Activated CD4-positive, alpha-beta memory T cell treated with anti-CD3 and anti-CD28 coated beads for 36 hours (primary cell): ENCODE measurements at regions of chr3 and their contacts with region 1.

Region 1: DNA sequence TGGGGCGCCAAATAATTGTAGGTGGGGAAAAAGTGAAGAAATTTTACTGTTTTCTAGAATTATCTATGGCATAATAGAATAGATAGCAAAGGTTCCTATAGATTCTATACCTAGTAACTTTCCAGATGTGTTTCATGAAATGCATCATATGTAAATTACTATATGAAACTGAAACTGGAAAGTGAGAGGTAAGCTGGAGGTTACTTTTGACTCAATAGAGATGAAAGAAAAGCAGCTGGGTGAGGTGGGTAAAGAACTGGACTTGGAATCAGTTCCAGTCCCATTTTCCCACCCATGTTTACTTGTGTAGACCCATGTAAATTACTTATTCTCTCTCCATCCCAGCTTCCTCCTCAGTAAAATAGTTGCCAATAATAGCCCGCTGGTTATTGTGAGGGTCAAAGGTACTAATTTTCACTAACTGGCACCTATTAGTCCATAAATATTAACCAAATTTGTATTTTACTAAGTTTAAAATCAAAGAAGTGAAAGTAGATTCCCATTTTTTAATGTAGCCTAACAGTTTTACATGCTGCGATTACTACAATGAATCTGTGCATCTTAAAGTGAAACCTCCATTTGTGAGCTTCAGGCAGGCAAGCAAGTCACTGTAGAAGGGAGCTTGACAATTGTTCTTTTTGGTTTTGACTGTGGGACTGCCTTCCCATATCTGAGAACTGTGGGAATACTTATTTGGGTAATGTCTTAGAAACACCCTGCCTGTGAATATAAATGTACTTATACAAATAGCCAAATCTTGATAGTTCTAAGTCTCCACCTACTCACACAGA is 312.1 kb downstream of the SLC9A9 start:
- DNase-seq: no peak
- H3K4me3 Mint-ChIP-seq: no peak overlapping the region
- H3K27ac Mint-ChIP-seq: no peak overlapping the region
- H3K4me1 Mint-ChIP-seq: peaks cover 24% of the 10 kb centered on the region
- H3K27me3 Mint-ChIP-seq: no peaks in the 10 kb centered on the region

Region 2: DNA sequence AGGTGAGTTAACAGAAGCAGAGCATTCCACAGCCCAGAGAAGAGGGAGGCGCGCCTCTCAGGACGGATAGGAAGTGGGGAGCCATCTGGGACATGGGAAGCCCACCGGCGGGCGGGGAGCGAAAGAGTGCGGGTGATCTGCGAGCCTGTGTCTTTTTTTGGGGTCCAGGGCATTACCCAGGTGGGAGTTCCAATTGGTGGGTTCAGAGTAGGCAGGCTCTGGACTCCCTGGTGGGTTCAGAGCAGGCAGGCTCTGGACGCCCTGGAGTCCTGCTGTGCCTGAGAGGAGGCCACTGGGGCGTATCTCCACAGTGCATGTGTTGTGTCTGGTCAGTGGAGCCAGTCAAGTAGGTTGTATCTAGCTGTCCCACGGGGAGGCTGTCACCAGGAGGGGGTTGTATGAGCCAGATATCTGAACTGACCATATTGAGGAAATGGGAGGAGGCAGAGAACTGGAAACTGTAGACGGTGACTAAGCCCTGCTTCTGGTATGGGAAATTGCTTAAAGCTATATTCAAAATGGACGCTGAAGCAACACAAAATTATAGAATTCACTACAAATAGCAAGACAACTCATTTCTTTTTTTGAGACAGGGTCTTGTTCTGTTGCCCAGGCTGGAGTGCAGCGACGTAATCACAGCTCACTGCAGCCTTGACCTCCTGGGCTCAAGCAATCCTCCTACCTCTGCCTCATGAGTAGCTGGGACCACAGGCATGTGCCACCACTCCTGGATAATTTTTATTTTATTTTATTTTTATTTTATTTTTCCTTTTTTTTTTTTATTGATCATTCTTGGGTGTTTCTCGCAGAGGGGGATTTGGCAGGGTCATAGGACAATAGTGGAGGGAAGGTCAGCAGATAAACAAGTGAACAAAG is 451.1 kb before region 1 on chr3:
- CTCF ChIA-PET with region 1: no interaction called
- POLR2A ChIA-PET with region 1: no interaction called
- intact Hi-C with region 1: loop called (anchors 5 kb)
- DNase-seq: peak; percentile 36
- H3K4me3 Mint-ChIP-seq: peak overlapping the region; percentile 40
- H3K27ac Mint-ChIP-seq: no peak overlapping the region
- H3K4me1 Mint-ChIP-seq: peaks cover 34% of the 10 kb centered on the region
- H3K27me3 Mint-ChIP-seq: peaks cover 6% of the 10 kb centered on the region

Region 3: DNA sequence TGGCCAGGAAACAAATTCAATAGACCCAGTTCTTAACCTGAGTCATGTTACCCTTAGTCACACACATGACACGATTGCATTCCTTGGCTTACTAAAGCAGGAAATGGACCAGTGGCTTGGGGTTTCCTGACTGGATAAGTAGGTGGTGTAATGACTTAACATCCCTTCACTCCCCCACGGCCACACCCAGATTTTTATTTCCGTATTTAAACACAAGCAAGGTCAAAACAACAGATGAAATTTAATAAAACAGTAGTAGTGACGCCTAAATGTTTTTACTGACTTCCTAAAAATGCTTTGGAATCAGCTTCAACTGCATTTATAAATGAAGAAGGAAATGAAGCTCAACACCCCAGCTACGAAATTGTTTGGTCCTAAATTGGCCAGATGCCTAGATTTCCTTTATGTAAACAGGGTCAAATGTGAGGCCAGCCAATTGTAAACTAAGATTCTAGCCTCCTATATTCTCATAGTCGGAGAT is 92.3 kb before region 1 on chr3:
- CTCF ChIA-PET with region 1: no interaction called
- POLR2A ChIA-PET with region 1: no interaction called
- intact Hi-C with region 1: loop called (anchors 2 kb)
- DNase-seq: peak; percentile 55
- H3K4me3 Mint-ChIP-seq: no peak overlapping the region
- H3K27ac Mint-ChIP-seq: no peak overlapping the region
- H3K4me1 Mint-ChIP-seq: peaks cover 29% of the 10 kb centered on the region
- H3K27me3 Mint-ChIP-seq: no peaks in the 10 kb centered on the region

Region 4: GRCh38 chr3:143644370-143645089 is 108.3 kb after region 1 on chr3:
- CTCF ChIA-PET with region 1: no interaction called
- POLR2A ChIA-PET with region 1: no interaction called
- intact Hi-C with region 1: loop called (anchors 5 kb)
- DNase-seq: peak; percentile 27
- H3K4me3 Mint-ChIP-seq: no peak overlapping the region
- H3K27ac Mint-ChIP-seq: no peak overlapping the region
- H3K4me1 Mint-ChIP-seq: no peaks in the 10 kb centered on the region
- H3K27me3 Mint-ChIP-seq: no peaks in the 10 kb centered on the region